CD8-positive, alpha-beta T cell (primary cell): ENCODE measurements at regions of chr4 and their contacts with region 1.

Region 1: DNA sequence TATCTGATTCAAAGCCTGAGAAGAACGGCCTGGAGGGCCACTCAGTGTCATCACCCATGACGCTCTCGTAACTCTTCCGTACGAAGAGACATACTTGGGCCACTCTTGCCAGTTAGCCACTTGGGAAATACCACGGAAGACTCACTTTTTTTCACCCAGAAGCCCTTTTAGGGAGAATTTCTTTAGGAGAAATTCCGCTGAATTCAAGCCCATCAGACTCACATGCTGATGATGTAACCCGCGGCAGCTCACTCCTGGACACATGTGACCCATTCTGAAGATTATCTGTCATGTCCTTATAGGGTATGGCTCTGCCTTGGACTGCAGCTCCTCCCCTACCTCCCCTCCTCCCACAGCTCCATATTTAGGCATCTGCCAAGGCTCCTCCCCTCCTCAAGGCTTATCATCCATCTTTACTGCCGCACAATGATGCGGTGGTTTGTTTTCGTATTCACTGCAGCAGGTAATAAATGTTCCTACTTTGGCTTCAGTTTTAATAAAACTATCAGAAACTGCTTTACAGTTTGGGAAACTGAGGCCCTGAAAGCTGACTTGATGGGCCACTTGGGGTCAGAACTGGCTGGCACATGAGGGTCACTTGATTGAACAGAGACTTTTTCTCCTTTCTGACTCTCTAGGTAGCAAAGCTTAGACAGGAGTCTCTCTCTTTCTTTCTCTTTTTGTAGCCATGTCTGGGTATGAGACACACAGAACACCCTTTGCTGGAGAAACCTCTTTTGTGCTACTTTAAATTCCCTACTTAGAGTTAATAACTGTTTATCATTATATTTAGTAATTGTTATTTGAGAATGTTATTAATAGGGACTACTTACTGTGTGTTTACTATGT is 42.1 kb downstream of the RHOH start:
- DNase-seq: peak; percentile 63 to 96 (median 73)
- ATAC-seq: peak; percentile 90
- H3K4me3 ChIP-seq: peak overlapping the region; percentile 46 to 48
- H3K4me3 Mint-ChIP-seq: peak overlapping the region; percentile 82
- H3K27ac ChIP-seq: peak overlapping the region; percentile 68 to 98
- H3K27ac Mint-ChIP-seq: peak overlapping the region; percentile 95
- H3K4me1 ChIP-seq: peaks cover 95% of the 10 kb centered on the region
- H3K4me1 Mint-ChIP-seq: peaks cover 94% of the 10 kb centered on the region
- H3K27me3 ChIP-seq: no peaks in the 10 kb centered on the region
- H3K27me3 Mint-ChIP-seq: no peaks in the 10 kb centered on the region
- CTCF ChIP-seq: no peak

Region 2: DNA sequence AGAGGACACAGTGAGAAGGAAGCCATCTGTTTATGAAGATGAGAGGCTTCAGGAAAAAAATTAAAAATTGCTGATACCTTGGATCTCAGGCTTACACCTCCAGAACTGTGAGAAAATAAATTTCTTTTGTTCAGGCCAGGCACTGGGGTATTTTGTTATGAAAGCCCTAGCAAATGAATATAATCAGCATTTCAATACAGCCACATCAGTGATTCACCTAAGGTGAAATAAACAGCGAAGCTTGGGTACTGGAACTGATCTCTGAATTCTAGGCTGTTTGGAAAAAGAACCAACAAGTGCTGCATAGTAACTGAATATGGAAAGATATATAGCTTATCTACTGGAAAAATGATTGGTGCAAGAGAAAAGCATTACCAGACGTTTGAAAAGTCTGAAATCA is 349.7 kb before region 1 on chr4:
- CTCF ChIA-PET with region 1: no interaction called
- POLR2A ChIA-PET with region 1: no interaction called
- intact Hi-C with region 1: no loop called
- DNase-seq: no peak
- ATAC-seq: no peak
- H3K4me3 ChIP-seq: no peak overlapping the region
- H3K4me3 Mint-ChIP-seq: no peak overlapping the region
- H3K27ac ChIP-seq: no peak overlapping the region
- H3K27ac Mint-ChIP-seq: no peak overlapping the region
- H3K4me1 ChIP-seq: no peaks in the 10 kb centered on the region
- H3K4me1 Mint-ChIP-seq: no peaks in the 10 kb centered on the region
- H3K27me3 ChIP-seq: no peaks in the 10 kb centered on the region
- H3K27me3 Mint-ChIP-seq: no peaks in the 10 kb centered on the region
- CTCF ChIP-seq: no peak

Region 3: GRCh38 chr4:40199999-40200874 is 38.7 kb before region 1 on chr4:
- CTCF ChIA-PET with region 1: interaction called, 10 read pairs
- POLR2A ChIA-PET with region 1: interaction called, 210 read pairs
- intact Hi-C with region 1: loop called (anchors 2 to 5 kb)
- DNase-seq: peak in 7 of 9 experiments; percentile 41 to 88 (median 67)
- ATAC-seq: peak; percentile 24
- H3K4me3 ChIP-seq: peak overlapping the region; percentile 83 to 87
- H3K4me3 Mint-ChIP-seq: peak overlapping the region; percentile 100
- H3K27ac ChIP-seq: peak overlapping the region; percentile 89 to 96
- H3K27ac Mint-ChIP-seq: peak overlapping the region; percentile 100
- H3K4me1 ChIP-seq: peaks cover 25% of the 10 kb centered on the region
- H3K4me1 Mint-ChIP-seq: peaks cover 41% of the 10 kb centered on the region
- H3K27me3 ChIP-seq: no peaks in the 10 kb centered on the region
- H3K27me3 Mint-ChIP-seq: no peaks in the 10 kb centered on the region
- CTCF ChIP-seq: no peak

Region 4: GRCh38 chr4:40205259-40206198 is 33.4 kb before region 1 on chr4:
- CTCF ChIA-PET with region 1: interaction called, 10 read pairs
- POLR2A ChIA-PET with region 1: interaction called, 210 read pairs
- intact Hi-C with region 1: loop called (anchors 2 to 5 kb)
- DNase-seq: peak in 2 of 9 experiments; percentile 56 to 71
- ATAC-seq: peak; percentile 32
- H3K4me3 ChIP-seq: peak overlapping the region; percentile 30 to 83
- H3K4me3 Mint-ChIP-seq: peak overlapping the region; percentile 97
- H3K27ac ChIP-seq: peak overlapping the region; percentile 22 to 96
- H3K27ac Mint-ChIP-seq: peak overlapping the region; percentile 92
- H3K4me1 ChIP-seq: peaks cover 47% of the 10 kb centered on the region
- H3K4me1 Mint-ChIP-seq: peaks cover 70% of the 10 kb centered on the region
- H3K27me3 ChIP-seq: no peaks in the 10 kb centered on the region
- H3K27me3 Mint-ChIP-seq: no peaks in the 10 kb centered on the region
- CTCF ChIP-seq: no peak

Region 5: GRCh38 chr4:40212674-40213527 is 26.0 kb before region 1 on chr4:
- CTCF ChIA-PET with region 1: interaction called, 3 read pairs
- POLR2A ChIA-PET with region 1: interaction called, 210 read pairs
- intact Hi-C with region 1: loop called in 1 of 2 experiments (anchors 2 kb)
- DNase-seq: peak in 1 of 9 experiments; percentile 59
- ATAC-seq: no peak
- H3K4me3 ChIP-seq: peak overlapping the region; percentile 5 to 31
- H3K4me3 Mint-ChIP-seq: peak overlapping the region; percentile 67
- H3K27ac ChIP-seq: peak overlapping the region; percentile 42 to 96
- H3K27ac Mint-ChIP-seq: peak overlapping the region; percentile 95
- H3K4me1 ChIP-seq: peaks cover 89% of the 10 kb centered on the region
- H3K4me1 Mint-ChIP-seq: peaks cover 93% of the 10 kb centered on the region
- H3K27me3 ChIP-seq: no peaks in the 10 kb centered on the region
- H3K27me3 Mint-ChIP-seq: no peaks in the 10 kb centered on the region
- CTCF ChIP-seq: no peak

Region 6: DNA sequence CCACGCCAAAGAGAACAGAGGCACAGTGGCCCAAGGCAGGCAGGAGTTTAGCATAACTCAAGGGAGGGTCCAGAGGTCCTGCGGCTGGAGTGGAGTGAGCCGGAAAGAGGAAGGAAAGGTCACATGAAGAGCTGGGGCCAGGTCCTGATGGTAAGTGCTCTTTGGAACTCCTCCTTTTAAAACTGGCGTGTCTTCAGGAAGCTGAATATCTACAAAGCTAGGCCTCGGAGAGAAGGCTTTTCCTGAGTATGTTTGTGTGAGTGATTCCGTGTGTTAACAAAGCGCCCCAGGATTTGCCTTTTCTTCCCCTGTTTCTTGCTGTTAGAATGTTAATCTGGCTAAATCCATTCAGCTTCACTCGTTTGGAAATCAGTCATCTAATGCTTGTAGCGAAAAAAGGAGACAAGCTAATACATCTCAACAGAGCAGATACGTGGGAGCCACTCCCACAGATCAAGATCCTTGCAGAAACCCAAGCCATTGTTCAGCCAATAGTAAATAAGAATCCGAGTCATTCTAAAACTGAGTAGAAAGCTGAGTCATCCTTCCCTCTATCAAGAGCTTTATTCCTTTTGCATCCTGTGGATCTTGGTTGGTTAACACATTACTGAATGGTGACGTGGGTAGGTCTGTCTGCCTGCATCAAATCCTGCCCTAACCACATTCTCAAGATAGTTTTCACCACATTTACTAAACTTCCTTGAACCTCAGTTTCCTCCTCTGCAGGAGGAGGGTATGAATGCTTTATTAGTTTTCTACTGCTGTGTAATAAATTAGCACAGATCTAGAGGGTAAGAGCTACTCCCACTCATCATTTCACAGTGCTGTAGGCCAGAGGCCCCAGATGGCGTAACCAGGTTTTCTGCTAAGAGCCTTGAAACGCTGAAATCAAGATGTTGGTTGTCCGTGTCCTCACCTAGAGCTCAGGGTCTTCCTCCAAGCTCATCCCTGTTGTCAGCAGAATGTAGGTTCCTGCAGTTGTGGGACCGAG is 433.9 kb after region 1 on chr4:
- CTCF ChIA-PET with region 1: no interaction called
- POLR2A ChIA-PET with region 1: no interaction called
- intact Hi-C with region 1: no loop called
- DNase-seq: peak in 2 of 9 experiments; percentile 49 to 78
- ATAC-seq: peak; percentile 83
- H3K4me3 ChIP-seq: no peak overlapping the region
- H3K4me3 Mint-ChIP-seq: no peak overlapping the region
- H3K27ac ChIP-seq: peak overlapping the region in 1 of 2 experiments; percentile 6
- H3K27ac Mint-ChIP-seq: no peak overlapping the region
- H3K4me1 ChIP-seq: no peaks in the 10 kb centered on the region
- H3K4me1 Mint-ChIP-seq: peaks cover 10% of the 10 kb centered on the region
- H3K27me3 ChIP-seq: no peaks in the 10 kb centered on the region
- H3K27me3 Mint-ChIP-seq: no peaks in the 10 kb centered on the region
- CTCF ChIP-seq: no peak

Region 7: GRCh38 chr4:41400296-41400695 is 1161.4 kb after region 1 on chr4:
- CTCF ChIA-PET with region 1: no interaction called
- POLR2A ChIA-PET with region 1: no interaction called
- intact Hi-C with region 1: no loop called
- DNase-seq: no peak
- ATAC-seq: no peak
- H3K4me3 ChIP-seq: no peak overlapping the region
- H3K4me3 Mint-ChIP-seq: no peak overlapping the region
- H3K27ac ChIP-seq: no peak overlapping the region
- H3K27ac Mint-ChIP-seq: no peak overlapping the region
- H3K4me1 ChIP-seq: no peaks in the 10 kb centered on the region
- H3K4me1 Mint-ChIP-seq: no peaks in the 10 kb centered on the region
- H3K27me3 ChIP-seq: no peaks in the 10 kb centered on the region
- H3K27me3 Mint-ChIP-seq: no peaks in the 10 kb centered on the region
- CTCF ChIP-seq: no peak

Region 8: DNA sequence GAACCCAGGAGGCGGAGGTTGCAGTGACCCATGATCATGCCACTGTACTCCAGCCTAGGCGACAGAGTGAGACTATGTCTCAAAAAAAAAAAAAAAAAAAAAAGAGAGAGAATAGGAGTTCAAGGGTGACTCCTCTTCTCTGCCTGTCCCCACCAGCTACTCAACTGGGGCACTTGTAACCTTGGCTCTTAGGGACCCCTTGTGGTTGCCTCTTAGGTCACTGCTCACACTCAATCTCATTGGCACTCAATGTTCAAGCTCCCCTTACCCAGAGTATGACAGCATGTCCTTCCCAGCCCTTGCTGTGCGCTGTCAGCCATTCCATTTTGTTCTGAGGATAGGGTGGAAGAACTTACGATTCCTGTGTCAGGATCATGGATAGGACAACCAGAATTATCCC is 1995.9 kb after region 1 on chr4:
- CTCF ChIA-PET with region 1: no interaction called
- POLR2A ChIA-PET with region 1: no interaction called
- intact Hi-C with region 1: no loop called
- DNase-seq: no peak
- ATAC-seq: no peak
- H3K4me3 ChIP-seq: no peak overlapping the region
- H3K4me3 Mint-ChIP-seq: no peak overlapping the region
- H3K27ac ChIP-seq: no peak overlapping the region
- H3K27ac Mint-ChIP-seq: no peak overlapping the region
- H3K4me1 ChIP-seq: no peaks in the 10 kb centered on the region
- H3K4me1 Mint-ChIP-seq: no peaks in the 10 kb centered on the region
- H3K27me3 ChIP-seq: no peaks in the 10 kb centered on the region
- H3K27me3 Mint-ChIP-seq: no peaks in the 10 kb centered on the region
- CTCF ChIP-seq: no peak